Gastrocnemius medialis (tissue), 4 donors: ENCODE measurements at regions of chr17 and their contacts with region 1.

Region 1: DNA sequence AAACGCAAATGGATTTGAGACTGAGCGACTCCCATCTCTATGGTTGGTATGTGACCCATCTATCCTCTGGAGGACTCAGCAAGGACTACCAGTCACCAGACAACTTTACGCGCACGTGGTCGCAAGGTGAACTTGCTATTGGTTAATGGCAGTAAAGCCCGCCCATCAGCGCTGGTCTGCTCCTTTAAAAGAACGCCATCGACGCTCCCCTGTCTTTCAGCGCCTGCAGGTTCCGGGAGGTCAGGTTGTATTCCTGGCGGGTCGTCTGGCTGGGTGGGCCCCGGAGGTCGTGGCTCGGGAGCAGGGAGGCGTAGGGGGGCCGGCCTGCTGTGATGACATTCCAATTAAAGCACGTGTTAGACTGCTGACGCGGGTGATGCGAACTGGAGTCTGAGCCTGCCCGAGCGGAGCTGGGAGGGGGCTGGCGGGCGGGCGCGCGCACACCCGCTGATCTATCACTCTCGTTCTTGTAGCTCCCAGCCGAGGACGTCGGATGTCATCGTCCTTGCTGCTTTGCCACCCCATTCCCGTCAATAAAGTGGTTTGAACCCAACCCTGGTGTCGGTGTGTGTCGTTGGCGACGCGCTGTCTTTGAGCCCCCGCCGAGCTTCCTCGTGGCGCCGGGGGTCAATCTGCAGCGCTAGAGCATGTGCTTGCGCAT is 15.9 kb upstream of the ERN1 start:
- DNase-seq: peak; percentile 99
- ATAC-seq: peak; percentile 87 to 92
- H3K4me3 ChIP-seq: peak overlapping the region; percentile 80 to 95 (median 88)
- H3K27ac ChIP-seq: peak overlapping the region; percentile 98 to 99 (median 98)
- H3K4me1 ChIP-seq: peaks cover 31 to 47% of the 10 kb centered on the region in 2 donors
- H3K27me3 ChIP-seq: no peaks in the 10 kb centered on the region
- CTCF ChIP-seq: peak in 1 of 5 experiments; percentile 15
- POLR2A ChIP-seq: peak; percentile 99 to 100

Region 2: GRCh38 chr17:63984651-63985386 is 161.1 kb before region 1 on chr17:
- in situ Hi-C with region 1: no loop called
- intact Hi-C with region 1: loop called (anchors 5 kb)
- DNase-seq: peak; percentile 84 to 94
- ATAC-seq: peak; percentile 54 to 55
- H3K4me3 ChIP-seq: peak overlapping the region in 2 of 4 donors; percentile 4 to 23
- H3K27ac ChIP-seq: peak overlapping the region; percentile 98 to 100 (median 99)
- H3K4me1 ChIP-seq: peaks cover 75 to 76% of the 10 kb centered on the region in 2 donors
- H3K27me3 ChIP-seq: no peaks in the 10 kb centered on the region
- CTCF ChIP-seq: peak in 1 of 5 experiments; percentile 3
- POLR2A ChIP-seq: peak; percentile 36 to 44

Region 3: GRCh38 chr17:64202675-64203344 is 56.9 kb after region 1 on chr17:
- in situ Hi-C with region 1: no loop called
- intact Hi-C with region 1: loop called (anchors 5 kb)
- DNase-seq: peak; percentile 54 to 80
- ATAC-seq: peak; percentile 84 to 91
- H3K4me3 ChIP-seq: no peak overlapping the region
- H3K27ac ChIP-seq: peak overlapping the region; percentile 75 to 83 (median 76)
- H3K4me1 ChIP-seq: peaks cover 71 to 72% of the 10 kb centered on the region in 2 donors
- H3K27me3 ChIP-seq: no peaks in the 10 kb centered on the region
- CTCF ChIP-seq: no peak
- POLR2A ChIP-seq: no peak

Region 4: GRCh38 chr17:64240741-64241347 is 95.0 kb after region 1 on chr17:
- in situ Hi-C with region 1: no loop called
- intact Hi-C with region 1: no loop called
- DNase-seq: peak in 1 of 2 donors; percentile 37
- ATAC-seq: peak; percentile 45 to 57
- H3K4me3 ChIP-seq: no peak overlapping the region
- H3K27ac ChIP-seq: peak overlapping the region; percentile 48 to 74 (median 62)
- H3K4me1 ChIP-seq: peaks cover 52 to 74% of the 10 kb centered on the region in 2 donors
- H3K27me3 ChIP-seq: no peaks in the 10 kb centered on the region
- CTCF ChIP-seq: no peak
- POLR2A ChIP-seq: no peak

Region 5: GRCh38 chr17:64262417-64263260 is 116.8 kb after region 1 on chr17 and contains the start of gene TEX2:
- in situ Hi-C with region 1: no loop called
- intact Hi-C with region 1: loop called (anchors 2 kb)
- DNase-seq: peak; percentile 70 to 88
- ATAC-seq: peak; percentile 61 to 66
- H3K4me3 ChIP-seq: peak within 1 kb of the TSS; percentile 90 to 99 (median 96)
- H3K27ac ChIP-seq: peak within 1 kb of the TSS; percentile 96 to 100 (median 98)
- H3K4me1 ChIP-seq: peaks cover 55 to 58% of the 10 kb centered on the region in 2 donors
- H3K27me3 ChIP-seq: no peaks in the 10 kb centered on the region
- CTCF ChIP-seq: no peak
- POLR2A ChIP-seq: peak; percentile 92
- total RNA-seq, gene TEX2: 39.0 to 91.1 (median 77.4) TPM

Region 6: DNA sequence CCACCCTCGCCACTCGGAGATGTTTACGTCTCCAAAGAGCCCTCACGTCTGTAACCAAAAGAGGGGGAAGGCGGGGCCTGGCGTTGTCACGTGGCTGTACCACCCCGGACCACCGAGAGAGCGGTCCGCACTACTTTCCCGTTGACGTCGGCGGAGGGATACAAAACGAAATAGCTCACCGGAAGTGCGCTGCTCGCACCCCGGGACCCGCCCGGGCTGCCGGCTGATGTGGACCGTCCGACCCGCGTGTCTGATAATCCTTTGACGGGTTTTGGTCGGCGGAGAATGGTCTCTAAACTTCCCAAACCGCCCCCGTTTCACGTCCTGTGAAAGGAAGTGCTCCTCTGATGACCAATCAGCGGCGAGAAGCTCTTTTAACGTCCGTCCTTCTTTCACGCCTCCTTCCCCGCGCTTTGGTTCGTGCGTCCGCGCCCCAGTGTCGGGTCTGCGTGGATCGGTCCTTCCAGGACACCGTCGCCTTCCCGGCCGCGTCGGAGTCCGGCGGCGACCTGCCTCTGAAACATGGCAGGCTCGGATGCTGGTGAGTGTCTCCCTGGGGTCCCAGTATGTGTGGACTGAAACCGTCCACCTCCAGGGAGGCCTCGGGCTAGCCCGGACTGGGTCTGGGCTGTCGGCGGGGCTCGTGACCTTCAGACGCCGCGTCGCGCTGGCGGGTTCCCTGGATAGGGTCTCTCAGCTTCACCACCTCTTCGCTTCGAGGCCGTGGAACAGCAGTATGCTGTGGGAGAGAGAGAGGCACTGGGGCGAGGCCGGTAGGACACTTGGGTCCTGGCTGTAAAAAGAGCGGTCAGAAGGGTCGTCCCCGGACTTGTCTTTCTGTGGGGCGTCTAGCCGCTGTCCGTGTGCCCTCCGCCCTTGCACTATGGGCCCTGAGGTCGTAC is 360.9 kb after region 1 on chr17 and contains the start of gene CEP95:
- in situ Hi-C with region 1: no loop called
- intact Hi-C with region 1: loop called (anchors 5 kb)
- DNase-seq: peak; percentile 94 to 97
- ATAC-seq: peak; percentile 81 to 83
- H3K4me3 ChIP-seq: peak within 1 kb of the TSS; percentile 89 to 98 (median 96)
- H3K27ac ChIP-seq: peak within 1 kb of the TSS; percentile 97 to 100 (median 99)
- H3K4me1 ChIP-seq: peaks cover 36 to 40% of the 10 kb centered on the region in 2 donors
- H3K27me3 ChIP-seq: no peaks in the 10 kb centered on the region
- CTCF ChIP-seq: no peak
- POLR2A ChIP-seq: peak; percentile 82 to 83
- total RNA-seq, gene CEP95: 6.5 to 18.8 (median 17.7) TPM